ENCODE measurements at regions of chr20 and their contacts with region 1.

Region 1: DNA sequence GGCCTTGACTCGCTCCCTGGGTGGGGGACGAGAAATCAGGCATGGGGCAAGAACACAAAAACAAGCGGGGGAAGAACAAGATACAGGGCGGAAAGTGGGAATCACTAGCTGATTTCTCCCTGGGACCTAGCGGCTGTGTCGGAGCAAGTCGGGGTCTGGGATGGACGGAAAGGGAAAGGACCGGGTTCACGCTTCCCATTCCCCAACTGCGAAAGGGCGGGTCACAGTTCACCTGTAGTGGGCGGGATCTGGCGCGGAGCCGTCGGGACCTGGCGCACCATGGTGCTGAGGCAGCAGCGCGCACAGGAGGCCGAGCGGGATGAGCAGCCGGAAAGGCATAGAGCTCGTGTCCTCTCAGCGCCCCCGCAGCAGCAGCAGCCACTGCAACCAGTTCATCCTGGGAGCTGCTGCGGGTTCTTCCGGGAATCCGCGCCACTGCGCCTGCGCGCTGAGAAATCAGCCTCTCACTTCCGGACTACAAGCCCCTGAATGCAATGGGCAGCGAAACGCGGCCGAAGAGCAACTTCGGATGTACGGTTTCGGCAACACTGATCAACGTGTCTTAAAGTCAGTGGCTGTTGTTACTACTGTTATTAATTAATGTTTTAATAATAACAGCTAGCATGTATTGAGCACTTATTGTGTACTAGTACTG is at the start of gene EDEM2:
- DNase-seq: peak; percentile 96
- ATAC-seq: peak; percentile 95
- H3K4me3 Mint-ChIP-seq: peak within 1 kb of the TSS; percentile 93
- H3K27ac Mint-ChIP-seq: peak within 1 kb of the TSS; percentile 90
- H3K4me1 Mint-ChIP-seq: peaks cover 31% of the 10 kb centered on the region
- H3K27me3 Mint-ChIP-seq: no peaks in the 10 kb centered on the region
- total RNA-seq, gene EDEM2: 23.9 to 25.6 TPM

Region 2: DNA sequence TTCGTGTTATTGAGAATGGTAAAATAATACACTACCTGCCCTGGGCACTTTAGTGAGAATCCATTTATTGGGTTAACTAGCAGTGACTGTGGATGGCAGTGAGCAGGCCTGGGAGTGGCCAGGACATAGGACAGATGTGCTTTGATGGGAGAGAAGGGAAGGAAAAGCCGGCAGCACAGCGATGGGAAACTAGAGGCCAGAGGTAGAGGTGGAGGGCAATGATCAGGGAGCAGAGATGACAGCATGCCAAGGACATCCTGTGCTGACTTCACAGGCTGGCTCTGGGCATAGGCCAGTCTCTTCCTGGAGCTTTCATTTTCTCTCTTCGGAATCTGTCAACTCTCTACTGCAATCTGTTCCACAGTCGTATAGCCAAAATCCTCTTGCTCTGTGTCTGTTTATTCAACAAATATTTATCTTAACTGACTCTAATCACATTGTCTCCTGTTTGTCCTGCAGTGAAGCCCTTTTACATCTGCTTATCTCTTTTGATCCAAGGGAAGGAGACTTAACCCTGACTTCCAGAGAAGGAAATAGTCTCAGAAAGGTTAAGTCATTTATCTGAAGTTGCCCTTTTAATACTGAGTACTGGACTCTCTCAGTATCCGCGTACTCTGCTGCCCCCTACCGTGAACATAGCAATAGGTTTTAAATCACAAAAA is 61.0 kb after region 1 on chr20:
- CTCF ChIA-PET with region 1: interaction called, 35 read pairs
- DNase-seq: peak; percentile 87
- ATAC-seq: peak; percentile 91
- H3K4me3 Mint-ChIP-seq: no peak overlapping the region
- H3K27ac Mint-ChIP-seq: no peak overlapping the region
- H3K4me1 Mint-ChIP-seq: no peaks in the 10 kb centered on the region
- H3K27me3 Mint-ChIP-seq: no peaks in the 10 kb centered on the region

Region 3: GRCh38 chr20:35269055-35269781 is 122.2 kb after region 1 on chr20:
- CTCF ChIA-PET with region 1: interaction called, 39 read pairs
- DNase-seq: peak; percentile 68
- ATAC-seq: peak; percentile 82
- H3K4me3 Mint-ChIP-seq: no peak overlapping the region
- H3K27ac Mint-ChIP-seq: no peak overlapping the region
- H3K4me1 Mint-ChIP-seq: peaks cover 11% of the 10 kb centered on the region
- H3K27me3 Mint-ChIP-seq: no peaks in the 10 kb centered on the region

Region 4: DNA sequence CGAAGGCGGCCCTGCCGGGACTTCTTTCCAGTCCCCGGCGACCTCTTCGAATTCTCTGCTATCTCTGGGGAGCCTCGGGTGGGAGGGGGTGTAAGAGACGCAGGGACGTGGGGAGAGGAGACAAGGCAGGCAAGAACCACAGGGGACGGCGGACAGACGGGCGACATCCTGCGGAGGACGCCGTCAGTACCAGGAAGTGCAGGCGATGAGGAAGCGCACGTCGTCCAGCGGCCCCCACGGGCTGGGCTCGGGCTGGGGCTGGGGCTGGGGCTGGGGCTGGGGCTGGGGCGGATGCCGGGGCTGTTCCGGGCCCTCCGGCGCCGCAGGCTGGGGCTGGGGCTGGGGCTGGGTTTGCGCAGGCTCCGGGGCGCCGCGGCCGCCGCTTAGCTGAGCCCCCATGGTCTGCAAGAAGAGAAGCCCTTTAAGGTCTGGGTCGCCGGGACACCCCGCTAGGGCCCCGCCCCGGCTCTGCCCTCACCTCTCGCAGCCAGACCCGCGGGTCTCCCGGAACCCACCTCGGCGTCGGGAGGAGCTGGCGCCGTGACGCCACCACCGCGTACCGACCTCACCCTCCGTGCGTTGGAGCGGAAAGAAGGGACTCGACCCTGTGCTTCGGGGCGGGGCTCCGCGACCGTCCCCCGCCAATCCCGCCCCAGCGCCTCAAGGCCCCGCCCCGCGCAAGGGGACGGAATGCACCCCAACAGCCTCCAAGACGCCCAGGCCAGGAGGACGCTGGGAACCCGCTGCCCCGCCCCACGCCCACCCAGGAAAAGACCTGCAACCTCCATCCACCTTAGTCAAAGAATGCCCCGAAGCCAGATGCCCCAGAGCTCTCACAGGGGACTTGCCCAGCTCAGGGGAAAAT is 130.7 kb after region 1 on chr20 and contains the start of gene MMP24OS:
- CTCF ChIA-PET with region 1: interaction called, 17 read pairs
- DNase-seq: peak; percentile 96
- ATAC-seq: peak; percentile 92
- H3K4me3 Mint-ChIP-seq: peak within 1 kb of the TSS; percentile 98
- H3K27ac Mint-ChIP-seq: peak within 1 kb of the TSS; percentile 99
- H3K4me1 Mint-ChIP-seq: peaks cover 21% of the 10 kb centered on the region
- H3K27me3 Mint-ChIP-seq: no peaks in the 10 kb centered on the region
- total RNA-seq, gene MMP24OS: 28.4 to 44.3 TPM